ENCODE measurements at regions of chr18 and their contacts with region 1.

Region 1: DNA sequence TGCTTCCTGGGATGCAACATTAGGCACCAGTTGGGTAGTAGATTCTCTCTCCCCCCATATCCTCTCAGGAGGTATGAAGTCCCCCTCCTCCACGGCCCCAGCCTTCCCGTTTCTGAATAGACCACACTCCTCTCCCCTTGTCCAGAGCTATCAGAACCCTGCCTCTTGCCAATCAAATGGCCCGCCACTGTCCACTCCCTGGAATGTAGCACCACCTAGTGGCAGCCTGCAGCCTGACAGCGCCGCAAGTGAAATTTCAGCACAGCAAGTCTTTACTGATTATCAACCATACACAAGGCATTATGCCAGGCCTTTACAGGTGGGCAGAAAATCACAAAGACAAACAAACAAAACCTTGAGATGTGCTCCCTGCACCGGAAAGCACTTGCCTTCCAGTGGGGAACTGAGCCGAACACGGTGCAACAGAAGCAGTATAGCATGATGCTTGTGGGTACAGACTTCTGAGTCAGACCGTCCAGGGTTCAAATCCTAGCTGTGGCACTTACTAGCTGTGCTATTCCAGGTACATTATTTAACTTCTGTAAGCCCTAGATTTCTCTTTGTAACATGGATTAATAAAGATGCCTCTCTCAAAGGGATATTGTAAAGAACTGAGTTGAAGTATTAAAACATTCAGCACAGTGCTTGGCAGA is 174.0 kb downstream of the SMAD2 start:
- DNase-seq: peak; percentile 34
- H3K4me3 ChIP-seq: no peak overlapping the region
- H3K27ac ChIP-seq: no peak overlapping the region
- H3K4me1 ChIP-seq: no peaks in the 10 kb centered on the region
- CTCF ChIP-seq: peak; percentile 81

Region 2: GRCh38 chr18:47215554-47216138 is 540.8 kb before region 1 on chr18:
- CTCF ChIA-PET with region 1: no interaction called
- POLR2A ChIA-PET with region 1: no interaction called
- intact Hi-C with region 1: loop called (anchors 1 kb)
- DNase-seq: peak; percentile 26
- H3K4me3 ChIP-seq: no peak overlapping the region
- H3K27ac ChIP-seq: no peak overlapping the region
- H3K4me1 ChIP-seq: no peaks in the 10 kb centered on the region
- CTCF ChIP-seq: peak; percentile 68

Region 3: GRCh38 chr18:47397671-47398319 is 358.7 kb before region 1 on chr18:
- CTCF ChIA-PET with region 1: no interaction called
- POLR2A ChIA-PET with region 1: no interaction called
- intact Hi-C with region 1: loop called (anchors 10 kb)
- DNase-seq: peak; percentile 16
- H3K4me3 ChIP-seq: no peak overlapping the region
- H3K27ac ChIP-seq: no peak overlapping the region
- H3K4me1 ChIP-seq: no peaks in the 10 kb centered on the region
- CTCF ChIP-seq: peak; percentile 72

Region 4: DNA sequence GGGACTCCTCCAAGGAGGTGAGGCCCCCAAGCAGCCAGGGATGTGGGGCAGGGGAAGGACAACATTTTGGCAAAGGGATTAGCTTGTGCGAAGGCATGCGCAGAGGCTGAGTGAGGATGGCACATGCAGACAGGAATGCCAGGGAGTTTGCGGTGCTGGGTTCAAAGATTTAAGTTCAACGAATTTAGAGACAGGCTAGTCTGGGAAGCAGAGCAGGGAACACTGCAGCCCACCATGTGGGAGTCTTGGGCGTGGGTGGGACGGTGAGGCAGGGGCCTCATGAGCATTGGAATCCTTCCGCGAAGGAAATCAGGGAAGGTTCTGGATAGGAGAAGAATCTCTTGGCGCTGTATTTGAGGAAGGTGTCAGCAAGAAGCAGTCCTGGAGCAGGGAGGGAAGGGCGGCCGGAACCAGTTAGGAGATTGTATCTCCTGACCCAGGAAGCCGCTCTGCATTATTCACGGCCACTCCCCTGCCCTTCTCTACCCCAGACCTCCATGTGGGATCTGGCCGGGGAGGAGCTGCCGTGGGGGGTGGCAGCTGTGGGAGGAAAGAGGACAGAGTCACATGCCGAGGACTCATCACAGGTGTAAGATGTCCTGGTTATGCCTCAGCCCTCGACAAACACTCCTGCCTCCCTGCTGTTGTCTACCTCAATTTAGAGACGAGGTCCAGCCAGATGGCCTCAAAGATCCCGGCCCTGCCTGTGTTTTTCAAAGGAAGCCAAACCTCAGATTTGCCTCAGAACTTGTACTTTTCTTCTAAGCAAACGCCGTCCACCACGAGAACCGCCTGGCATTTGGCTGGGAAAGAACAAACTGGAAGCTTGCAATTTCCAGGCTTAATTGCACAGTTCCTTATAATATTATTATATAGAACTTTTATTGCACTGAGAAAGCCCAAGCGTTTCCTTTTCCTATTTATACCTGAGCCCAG is 297.7 kb after region 1 on chr18:
- CTCF ChIA-PET with region 1: no interaction called
- POLR2A ChIA-PET with region 1: no interaction called
- intact Hi-C with region 1: no loop called
- DNase-seq: no peak
- H3K4me3 ChIP-seq: no peak overlapping the region
- H3K27ac ChIP-seq: no peak overlapping the region
- H3K4me1 ChIP-seq: no peaks in the 10 kb centered on the region
- CTCF ChIP-seq: no peak